HepG2 (cell line): ENCODE measurements at regions of chr5 and their contacts with region 1.

Region 1: DNA sequence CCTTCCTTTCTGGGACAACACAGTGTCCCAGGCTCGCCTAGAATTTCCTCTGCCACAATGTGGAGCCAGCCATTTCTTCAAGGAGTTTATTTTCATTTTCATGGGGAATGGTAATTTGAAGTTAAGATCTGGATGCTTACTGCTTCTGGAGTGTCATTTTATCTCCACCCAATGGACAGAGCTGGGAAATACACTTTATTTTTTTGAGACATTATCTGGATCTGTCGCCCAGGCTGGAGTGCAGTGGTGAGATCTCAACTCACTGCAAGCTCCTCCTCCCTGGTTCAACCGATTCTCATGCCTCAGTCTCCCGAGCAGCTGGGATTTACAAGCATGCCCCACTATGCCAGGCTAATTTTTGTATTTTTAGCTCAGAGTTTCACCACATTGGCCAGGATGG is 12.7 kb upstream of the THG1L start:
- DNase-seq: peak; percentile 23
- ATAC-seq: peak; percentile 86
- H3K4me3 ChIP-seq: no peak overlapping the region
- H3K27ac ChIP-seq: no peak overlapping the region
- H3K4me1 ChIP-seq: no peaks in the 10 kb centered on the region
- H3K27me3 ChIP-seq: no peaks in the 10 kb centered on the region
- CTCF ChIP-seq: peak; percentile 75
- EP300 ChIP-seq: no peak
- POLR2A ChIP-seq: no peak
- RAD21 ChIP-seq: peak; percentile 30; the same call in 1 of the 2 replicates

Region 2: GRCh38 chr5:157148734-157149615 is 569.5 kb before region 1 on chr5:
- CTCF ChIA-PET with region 1: no interaction called
- POLR2A ChIA-PET with region 1: no interaction called
- in situ Hi-C with region 1: no loop called
- intact Hi-C with region 1: loop called (anchors 5 kb)
- DNase-seq: peak; percentile 47
- ATAC-seq: peak; percentile 92
- H3K4me3 ChIP-seq: no peak overlapping the region
- H3K27ac ChIP-seq: no peak overlapping the region
- H3K4me1 ChIP-seq: no peaks in the 10 kb centered on the region
- H3K27me3 ChIP-seq: 0 out of 5 replicates have a peak, but pooled peaks cover 0 to 3% of the 10 kb centered on the region in 2 experiments
- CTCF ChIP-seq: peak; percentile 82
- EP300 ChIP-seq: no peak
- POLR2A ChIP-seq: no peak
- RAD21 ChIP-seq: peak; percentile 17; the same call in 1 of the 2 replicates

Region 3: GRCh38 chr5:157328277-157328912 is 390.1 kb before region 1 on chr5:
- CTCF ChIA-PET with region 1: interaction called, 5 read pairs
- POLR2A ChIA-PET with region 1: no interaction called
- in situ Hi-C with region 1: no loop called
- intact Hi-C with region 1: loop called (anchors 1 kb)
- DNase-seq: peak; percentile 73
- ATAC-seq: peak; percentile 98
- H3K4me3 ChIP-seq: no peak overlapping the region; a peak in 1 of 6 replicates
- H3K27ac ChIP-seq: no peak overlapping the region
- H3K4me1 ChIP-seq: peaks cover 36% of the 10 kb centered on the region
- H3K27me3 ChIP-seq: no peaks in the 10 kb centered on the region
- CTCF ChIP-seq: peak; percentile 92
- EP300 ChIP-seq: no peak
- POLR2A ChIP-seq: no peak
- RAD21 ChIP-seq: peak; percentile 63

Region 4: DNA sequence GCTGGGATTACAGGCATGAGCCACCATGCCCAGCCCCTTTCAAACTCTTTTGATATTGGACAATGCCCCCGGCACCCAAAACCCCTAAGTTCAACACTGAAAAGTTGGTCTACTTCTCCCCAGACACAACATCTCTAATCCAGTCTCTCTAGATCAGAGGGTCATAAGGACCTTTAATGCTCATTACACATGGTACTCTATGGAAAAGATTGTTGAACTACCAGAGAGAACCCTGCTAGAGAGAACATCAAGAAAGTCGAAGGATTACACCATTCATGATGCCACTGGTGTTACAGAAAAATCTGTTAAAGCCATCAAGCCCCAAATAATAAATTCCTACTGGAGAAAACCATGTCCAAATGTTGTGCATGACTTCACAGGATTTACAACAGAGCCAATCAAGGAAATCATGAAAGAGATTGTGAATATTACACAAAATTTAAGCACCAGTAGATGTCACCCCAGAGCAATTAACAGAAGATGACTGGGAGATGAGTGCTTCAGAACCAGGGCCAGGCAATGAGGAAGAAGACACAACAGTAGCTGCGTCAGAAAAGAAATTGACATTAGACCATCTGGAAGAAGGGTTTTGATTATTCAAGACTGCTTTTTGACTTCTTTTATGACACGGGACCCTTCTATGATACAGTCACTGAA is 286.8 kb before region 1 on chr5:
- CTCF ChIA-PET with region 1: interaction called, 3 read pairs
- POLR2A ChIA-PET with region 1: no interaction called
- in situ Hi-C with region 1: no loop called
- intact Hi-C with region 1: loop called (anchors 10 kb)
- DNase-seq: peak; percentile 34
- ATAC-seq: peak; percentile 72
- H3K4me3 ChIP-seq: no peak overlapping the region
- H3K27ac ChIP-seq: no peak overlapping the region
- H3K4me1 ChIP-seq: no peaks in the 10 kb centered on the region
- H3K27me3 ChIP-seq: no peaks in the 10 kb centered on the region
- CTCF ChIP-seq: peak; percentile 66
- EP300 ChIP-seq: no peak
- POLR2A ChIP-seq: no peak
- RAD21 ChIP-seq: no peak

Region 5: GRCh38 chr5:157670662-157671591 is 47.6 kb before region 1 on chr5 and contains the start of gene C5orf52:
- CTCF ChIA-PET with region 1: interaction called, 8 read pairs
- POLR2A ChIA-PET with region 1: no interaction called
- in situ Hi-C with region 1: no loop called
- intact Hi-C with region 1: loop called (anchors 1 kb)
- DNase-seq: peak; percentile 47
- ATAC-seq: no peak
- H3K4me3 ChIP-seq: no peak within 1 kb of the TSS; a peak in 1 of 6 replicates
- H3K27ac ChIP-seq: no peak within 1 kb of the TSS
- H3K4me1 ChIP-seq: peaks cover 15% of the 10 kb centered on the region; the same call in 1 of the 2 replicates
- H3K27me3 ChIP-seq: no peaks in the 10 kb centered on the region
- CTCF ChIP-seq: no peak
- EP300 ChIP-seq: no peak
- POLR2A ChIP-seq: no peak
- RAD21 ChIP-seq: no peak
- total RNA-seq, gene C5orf52: not detected in 2 replicates

Region 6: GRCh38 chr5:157731272-157732129 is 13.0 kb after region 1 on chr5 and contains the start of gene THG1L:
- CTCF ChIA-PET with region 1: no interaction called
- POLR2A ChIA-PET with region 1: no interaction called
- in situ Hi-C with region 1: no loop called
- intact Hi-C with region 1: no loop called
- DNase-seq: peak; percentile 95
- ATAC-seq: peak; percentile 100
- H3K4me3 ChIP-seq: peak within 1 kb of the TSS; percentile 64 to 83 (median 67)
- H3K27ac ChIP-seq: peak within 1 kb of the TSS; percentile 87
- H3K4me1 ChIP-seq: peaks cover 7% of the 10 kb centered on the region; the same call in 1 of the 2 replicates
- H3K27me3 ChIP-seq: no peaks in the 10 kb centered on the region; a peak in 1 of 5 replicates
- CTCF ChIP-seq: no peak
- EP300 ChIP-seq: no peak
- POLR2A ChIP-seq: peak; percentile 92 to 95
- RAD21 ChIP-seq: no peak
- total RNA-seq, gene THG1L: 16.6 and 21.7 TPM in 2 replicates

Region 7: DNA sequence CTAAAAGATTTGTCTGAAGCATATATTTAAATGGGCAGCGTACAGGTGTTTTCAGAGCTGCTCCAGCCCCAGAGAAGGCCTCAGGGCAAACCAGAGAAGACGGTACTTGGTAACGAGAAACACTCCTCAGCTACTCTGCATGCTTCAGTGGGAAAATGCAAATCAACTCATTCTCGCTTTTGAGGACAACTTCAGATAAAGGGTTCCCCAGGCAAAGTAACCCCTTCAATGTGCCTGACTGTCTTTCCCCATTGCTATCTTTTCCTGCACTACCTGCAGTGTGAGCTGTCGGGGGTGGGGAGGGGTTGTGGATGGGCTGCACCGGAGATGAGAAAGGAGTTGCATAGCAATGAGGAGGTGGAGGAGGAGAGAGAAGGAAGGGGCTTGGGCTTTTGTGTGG is 480.1 kb after region 1 on chr5:
- CTCF ChIA-PET with region 1: no interaction called
- POLR2A ChIA-PET with region 1: no interaction called
- in situ Hi-C with region 1: no loop called
- intact Hi-C with region 1: no loop called
- DNase-seq: no peak
- ATAC-seq: no peak
- H3K4me3 ChIP-seq: no peak overlapping the region
- H3K27ac ChIP-seq: no peak overlapping the region
- H3K4me1 ChIP-seq: no peaks in the 10 kb centered on the region
- H3K27me3 ChIP-seq: peaks cover 0 to 2% of the 10 kb centered on the region in 2 experiments; a peak in 2 of 5 replicates
- CTCF ChIP-seq: no peak
- EP300 ChIP-seq: no peak
- POLR2A ChIP-seq: no peak
- RAD21 ChIP-seq: no peak